Mammary epithelial cell (primary cell): ENCODE measurements at regions of chr17 and their contacts with region 1.

Region 1: GRCh38 chr17:39738931-39739884 is 1.5 kb downstream of the GRB7 start:
- DNase-seq: peak; percentile 87
- H3K4me3 ChIP-seq: peak overlapping the region; percentile 67 to 85 (median 75)
- H3K27ac ChIP-seq: peak overlapping the region; percentile 91
- H3K4me1 ChIP-seq: peaks cover 29% of the 10 kb centered on the region
- H3K27me3 ChIP-seq: no peaks in the 10 kb centered on the region
- CTCF ChIP-seq: no peak

Region 2: DNA sequence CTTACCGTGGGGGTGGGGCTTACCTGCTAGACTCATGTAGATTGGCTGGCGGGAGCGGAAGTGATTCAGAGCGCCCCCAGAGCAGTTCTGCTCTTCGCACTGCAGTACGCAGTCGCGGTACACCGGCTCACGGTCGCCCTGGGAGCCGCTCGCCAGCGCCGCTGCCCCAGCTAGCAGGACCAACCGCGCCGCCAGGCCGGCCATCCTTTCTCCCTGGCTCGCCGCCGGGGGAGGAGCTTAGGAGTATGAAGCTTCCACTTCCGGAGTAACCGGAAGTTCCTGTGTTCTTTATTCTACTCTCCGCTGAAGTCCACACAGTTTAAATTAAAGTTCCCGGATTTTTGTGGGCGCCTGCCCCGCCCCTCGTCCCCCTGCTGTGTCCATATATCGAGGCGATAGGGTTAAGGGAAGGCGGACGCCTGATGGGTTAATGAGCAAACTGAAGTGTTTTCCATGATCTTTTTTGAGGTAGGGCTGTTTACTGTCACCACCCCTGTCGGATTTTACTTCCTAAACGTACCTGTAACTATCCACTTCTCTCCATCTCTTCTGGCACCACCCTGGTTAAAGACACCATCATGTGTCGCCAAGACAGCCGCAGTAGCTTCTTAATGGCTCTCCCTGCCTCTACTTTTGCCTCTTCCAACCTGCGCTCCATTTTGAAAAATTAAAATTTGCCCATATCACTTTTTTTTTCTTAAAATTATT is 51.2 kb before region 1 on chr17 and contains the start of gene PGAP3:
- CTCF ChIA-PET with region 1: no interaction called
- dilution Hi-C with region 1: loop called (anchors 5 kb)
- in situ Hi-C with region 1: no loop called
- intact Hi-C with region 1: loop called (anchors 2 kb)
- DNase-seq: peak; percentile 90
- H3K4me3 ChIP-seq: peak within 1 kb of the TSS; percentile 50 to 76 (median 66)
- H3K27ac ChIP-seq: peak within 1 kb of the TSS; percentile 41
- H3K4me1 ChIP-seq: peaks cover 10% of the 10 kb centered on the region
- H3K27me3 ChIP-seq: no peaks in the 10 kb centered on the region
- CTCF ChIP-seq: no peak
- total RNA-seq, gene PGAP3: 8.3 to 13.2 TPM

Region 3: DNA sequence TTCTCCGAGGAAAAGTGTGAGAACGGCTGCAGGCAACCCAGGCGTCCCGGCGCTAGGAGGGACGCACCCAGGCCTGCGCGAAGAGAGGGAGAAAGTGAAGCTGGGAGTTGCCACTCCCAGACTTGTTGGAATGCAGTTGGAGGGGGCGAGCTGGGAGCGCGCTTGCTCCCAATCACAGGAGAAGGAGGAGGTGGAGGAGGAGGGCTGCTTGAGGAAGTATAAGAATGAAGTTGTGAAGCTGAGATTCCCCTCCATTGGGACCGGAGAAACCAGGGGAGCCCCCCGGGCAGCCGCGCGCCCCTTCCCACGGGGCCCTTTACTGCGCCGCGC is 39.4 kb before region 1 on chr17 and contains the start of gene ERBB2:
- CTCF ChIA-PET with region 1: no interaction called
- dilution Hi-C with region 1: no loop called
- in situ Hi-C with region 1: no loop called
- intact Hi-C with region 1: no loop called
- DNase-seq: peak; percentile 74
- H3K4me3 ChIP-seq: peak within 1 kb of the TSS; percentile 84 to 91 (median 86)
- H3K27ac ChIP-seq: peak within 1 kb of the TSS; percentile 52
- H3K4me1 ChIP-seq: peaks cover 18% of the 10 kb centered on the region
- H3K27me3 ChIP-seq: no peaks in the 10 kb centered on the region
- CTCF ChIP-seq: no peak
- total RNA-seq, gene ERBB2: 54.3 to 66.5 TPM

Region 4: GRCh38 chr17:39828443-39828842 is 89.2 kb after region 1 on chr17:
- CTCF ChIA-PET with region 1: no interaction called
- dilution Hi-C with region 1: no loop called
- in situ Hi-C with region 1: no loop called
- intact Hi-C with region 1: no loop called
- DNase-seq: no peak
- H3K4me3 ChIP-seq: no peak overlapping the region
- H3K27ac ChIP-seq: no peak overlapping the region
- H3K4me1 ChIP-seq: no peaks in the 10 kb centered on the region
- H3K27me3 ChIP-seq: no peaks in the 10 kb centered on the region
- CTCF ChIP-seq: no peak

Region 5: DNA sequence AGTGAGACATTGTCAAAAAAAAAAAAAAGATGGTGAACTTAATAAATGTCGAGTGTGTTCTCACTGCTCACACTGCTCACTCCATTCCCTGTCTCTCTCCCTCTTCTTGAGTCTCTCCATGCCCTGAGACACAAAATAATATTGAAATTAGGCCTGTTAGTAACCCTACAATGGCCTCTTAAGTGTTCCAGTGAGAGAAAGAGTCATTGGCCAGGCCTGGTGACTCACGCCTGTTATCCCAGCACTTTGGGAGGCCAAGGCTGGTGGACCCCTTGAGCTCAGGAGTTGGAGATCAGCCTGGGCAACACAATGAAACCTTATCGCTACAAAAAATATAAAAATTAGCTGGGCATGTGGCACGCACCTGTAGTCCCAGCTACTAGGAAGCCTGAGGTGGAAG is 259.9 kb after region 1 on chr17:
- CTCF ChIA-PET with region 1: no interaction called
- dilution Hi-C with region 1: no loop called
- in situ Hi-C with region 1: no loop called
- intact Hi-C with region 1: no loop called
- DNase-seq: no peak
- H3K4me3 ChIP-seq: no peak overlapping the region
- H3K27ac ChIP-seq: no peak overlapping the region
- H3K4me1 ChIP-seq: no peaks in the 10 kb centered on the region
- H3K27me3 ChIP-seq: no peaks in the 10 kb centered on the region
- CTCF ChIP-seq: no peak